Posterior vena cava (tissue), 2 donors: ENCODE measurements at regions of chr19 and their contacts with region 1.

Region 1: DNA sequence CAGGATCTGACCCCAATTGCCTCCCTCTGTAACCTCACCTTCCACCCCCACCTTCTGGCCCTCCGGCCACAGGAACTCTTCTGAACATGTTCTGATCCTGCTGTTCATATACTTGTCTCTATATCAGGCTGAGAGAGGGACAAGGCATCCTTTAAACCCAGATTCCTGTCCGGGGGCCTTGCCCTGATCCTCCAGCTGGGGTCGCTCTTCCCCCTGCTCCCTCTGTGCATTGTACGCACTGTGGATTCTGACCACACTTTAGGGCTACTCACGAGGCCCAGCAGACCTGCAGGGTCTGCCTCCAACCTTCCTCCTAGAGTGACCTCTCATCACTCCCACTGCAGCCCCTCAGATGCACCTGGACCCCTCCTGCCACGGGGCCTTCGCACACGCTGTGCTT is 269.3 kb downstream of the UQCRFS1 start:
- DNase-seq: no peak

Region 2: DNA sequence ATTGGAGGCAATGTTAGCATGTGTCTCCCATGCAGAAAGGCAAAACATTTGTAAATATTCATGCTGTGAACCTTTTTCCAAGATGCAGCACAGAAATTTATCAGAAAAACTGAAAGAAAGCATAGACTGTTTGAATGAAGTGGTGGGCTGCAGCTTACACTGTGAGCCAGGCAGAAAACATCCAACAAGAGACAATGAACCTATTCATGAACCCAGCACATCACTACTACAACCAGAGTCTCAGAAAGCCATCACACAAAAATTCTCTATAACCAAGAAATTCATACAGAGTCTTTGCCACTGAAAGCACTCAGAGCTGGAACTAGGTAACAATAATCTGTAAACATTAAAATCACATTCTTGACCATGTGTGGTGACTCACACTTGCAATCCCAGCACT is 179.6 kb before region 1 on chr19:
- intact Hi-C with region 1: no loop called
- DNase-seq: no peak

Region 3: DNA sequence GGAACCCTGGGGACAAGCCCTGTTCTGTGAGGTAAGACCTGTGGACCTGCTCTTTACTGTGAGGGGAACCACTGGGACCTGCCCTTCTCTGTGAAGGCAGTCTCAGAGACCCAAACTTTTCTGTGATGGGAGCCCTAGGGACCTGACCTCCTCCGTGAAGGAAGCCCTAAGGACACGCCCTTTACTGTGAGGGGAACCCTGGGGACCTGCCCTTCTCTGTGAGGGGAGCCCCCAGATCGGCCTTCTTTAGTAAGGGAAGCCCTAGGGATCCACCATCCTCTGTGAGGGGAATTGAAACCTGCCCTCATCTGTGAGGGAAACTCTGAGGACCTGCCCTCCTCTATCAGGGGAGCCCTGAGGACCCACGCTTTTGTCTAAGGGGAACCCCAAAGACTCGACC is 74.2 kb before region 1 on chr19:
- intact Hi-C with region 1: loop called in 1 of 2 experiments (anchors 2 kb)
- DNase-seq: no peak